ENCODE measurements at regions of chr19 and their contacts with region 1.

Region 1: GRCh38 chr19:2969104-2969504 is 8.3 kb upstream of the TLE6 start:
- DNase-seq: peak; percentile 78
- H3K4me3 ChIP-seq: no peak overlapping the region
- H3K27ac ChIP-seq: peak overlapping the region; percentile 65
- H3K4me1 ChIP-seq: peaks cover 23% of the 10 kb centered on the region
- H3K27me3 ChIP-seq: no peaks in the 10 kb centered on the region
- CTCF ChIP-seq: no peak
- POLR2A ChIP-seq: no peak

Region 2: GRCh38 chr19:2983351-2984195 is 14.5 kb after region 1 on chr19:
- CTCF ChIA-PET with region 1: interaction called, 5 read pairs
- POLR2A ChIA-PET with region 1: interaction called, 6 read pairs
- dilution Hi-C with region 1: no loop called
- intact Hi-C with region 1: loop called (anchors 1 kb)
- DNase-seq: peak; percentile 64
- H3K4me3 ChIP-seq: peak overlapping the region in 2 of 3 experiments; percentile 13 to 14
- H3K27ac ChIP-seq: peak overlapping the region; percentile 70
- H3K4me1 ChIP-seq: peaks cover 19% of the 10 kb centered on the region
- H3K27me3 ChIP-seq: no peaks in the 10 kb centered on the region
- CTCF ChIP-seq: no peak
- POLR2A ChIP-seq: peak; percentile 33

Region 3: GRCh38 chr19:2993579-2993978 is 24.5 kb after region 1 on chr19:
- CTCF ChIA-PET with region 1: no interaction called
- POLR2A ChIA-PET with region 1: no interaction called
- dilution Hi-C with region 1: no loop called
- intact Hi-C with region 1: no loop called
- DNase-seq: no peak
- H3K4me3 ChIP-seq: no peak overlapping the region
- H3K27ac ChIP-seq: no peak overlapping the region
- H3K4me1 ChIP-seq: no peaks in the 10 kb centered on the region
- H3K27me3 ChIP-seq: no peaks in the 10 kb centered on the region
- CTCF ChIP-seq: no peak
- POLR2A ChIP-seq: no peak

Region 4: GRCh38 chr19:3234800-3235199 is 265.7 kb after region 1 on chr19:
- CTCF ChIA-PET with region 1: no interaction called
- POLR2A ChIA-PET with region 1: no interaction called
- dilution Hi-C with region 1: no loop called
- intact Hi-C with region 1: no loop called
- DNase-seq: no peak
- H3K4me3 ChIP-seq: no peak overlapping the region
- H3K27ac ChIP-seq: no peak overlapping the region
- H3K4me1 ChIP-seq: no peaks in the 10 kb centered on the region
- H3K27me3 ChIP-seq: peaks cover 0 to 2% of the 10 kb centered on the region in 2 experiments
- CTCF ChIP-seq: peak in 1 of 2 donors; percentile 19
- POLR2A ChIP-seq: no peak

Region 5: DNA sequence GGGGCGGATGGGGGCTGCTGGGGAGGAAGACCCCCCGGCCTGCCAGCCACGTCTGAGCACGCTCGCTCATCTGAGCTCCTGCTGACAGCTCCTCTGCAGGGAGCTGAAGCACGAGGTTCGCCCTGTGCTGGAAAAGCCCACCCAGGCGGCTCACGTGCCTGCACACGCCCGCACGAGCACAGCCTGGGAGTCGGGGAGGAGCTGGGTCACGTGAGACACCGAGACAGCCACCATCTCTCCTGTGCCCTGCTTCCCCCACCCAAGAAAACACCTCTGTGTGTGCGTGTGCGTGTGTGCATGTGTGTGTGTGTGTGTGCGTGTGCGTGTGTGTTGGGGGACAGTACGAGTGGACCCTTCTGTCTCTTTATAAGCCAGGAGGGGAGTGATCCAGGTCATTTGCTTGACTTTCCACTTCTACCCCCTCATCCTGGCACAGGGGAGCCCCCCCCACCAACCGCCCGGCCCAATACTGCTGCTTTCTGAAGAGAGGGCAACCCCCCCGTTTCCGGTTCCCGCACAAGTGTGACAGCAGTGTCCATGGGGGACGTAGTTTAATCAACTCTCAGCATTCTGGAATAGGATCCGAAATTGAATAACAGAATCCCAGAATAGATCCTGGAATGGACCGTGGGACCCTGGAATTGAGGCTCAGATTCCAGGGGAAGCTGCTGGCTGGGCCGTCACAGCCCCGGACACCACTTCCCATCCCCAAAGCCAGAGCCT is 297.8 kb after region 1 on chr19:
- CTCF ChIA-PET with region 1: no interaction called
- POLR2A ChIA-PET with region 1: no interaction called
- dilution Hi-C with region 1: no loop called
- intact Hi-C with region 1: no loop called
- DNase-seq: no peak
- H3K4me3 ChIP-seq: no peak overlapping the region
- H3K27ac ChIP-seq: no peak overlapping the region
- H3K4me1 ChIP-seq: no peaks in the 10 kb centered on the region
- H3K27me3 ChIP-seq: peaks cover 16% of the 10 kb centered on the region in 2 experiments
- CTCF ChIP-seq: no peak
- POLR2A ChIP-seq: no peak

Measured in endothelial cell of umbilical vein (primary cell).